OCI-LY7 (cell line): ENCODE measurements at regions of chr3 and their contacts with region 1.

Region 1: GRCh38 chr3:177320765-177321247 is 123.5 kb upstream of the TBL1XR1 start:
- DNase-seq: peak; percentile 80
- H3K4me3 ChIP-seq: peak overlapping the region; percentile 30
- H3K27ac ChIP-seq: peak overlapping the region; percentile 53
- H3K4me1 ChIP-seq: peaks cover 66% of the 10 kb centered on the region
- CTCF ChIP-seq: no peak

Region 2: GRCh38 chr3:177197041-177197727 is 123.6 kb before region 1 on chr3 and contains the start of gene TBL1XR1:
- CTCF ChIA-PET with region 1: no interaction called
- POLR2A ChIA-PET with region 1: interaction called, 3 read pairs
- intact Hi-C with region 1: loop called (anchors 2 kb)
- DNase-seq: peak; percentile 94
- H3K4me3 ChIP-seq: peak within 1 kb of the TSS; percentile 100
- H3K27ac ChIP-seq: peak within 1 kb of the TSS; percentile 95
- H3K4me1 ChIP-seq: peaks cover 56% of the 10 kb centered on the region
- CTCF ChIP-seq: no peak
- total RNA-seq, gene TBL1XR1: 103 and 121 TPM in 2 replicates

Region 3: GRCh38 chr3:177294221-177294620 is 26.6 kb before region 1 on chr3:
- CTCF ChIA-PET with region 1: no interaction called
- POLR2A ChIA-PET with region 1: no interaction called
- intact Hi-C with region 1: no loop called
- DNase-seq: no peak
- H3K4me3 ChIP-seq: no peak overlapping the region
- H3K27ac ChIP-seq: no peak overlapping the region
- H3K4me1 ChIP-seq: peaks cover 5% of the 10 kb centered on the region
- CTCF ChIP-seq: no peak

Region 4: DNA sequence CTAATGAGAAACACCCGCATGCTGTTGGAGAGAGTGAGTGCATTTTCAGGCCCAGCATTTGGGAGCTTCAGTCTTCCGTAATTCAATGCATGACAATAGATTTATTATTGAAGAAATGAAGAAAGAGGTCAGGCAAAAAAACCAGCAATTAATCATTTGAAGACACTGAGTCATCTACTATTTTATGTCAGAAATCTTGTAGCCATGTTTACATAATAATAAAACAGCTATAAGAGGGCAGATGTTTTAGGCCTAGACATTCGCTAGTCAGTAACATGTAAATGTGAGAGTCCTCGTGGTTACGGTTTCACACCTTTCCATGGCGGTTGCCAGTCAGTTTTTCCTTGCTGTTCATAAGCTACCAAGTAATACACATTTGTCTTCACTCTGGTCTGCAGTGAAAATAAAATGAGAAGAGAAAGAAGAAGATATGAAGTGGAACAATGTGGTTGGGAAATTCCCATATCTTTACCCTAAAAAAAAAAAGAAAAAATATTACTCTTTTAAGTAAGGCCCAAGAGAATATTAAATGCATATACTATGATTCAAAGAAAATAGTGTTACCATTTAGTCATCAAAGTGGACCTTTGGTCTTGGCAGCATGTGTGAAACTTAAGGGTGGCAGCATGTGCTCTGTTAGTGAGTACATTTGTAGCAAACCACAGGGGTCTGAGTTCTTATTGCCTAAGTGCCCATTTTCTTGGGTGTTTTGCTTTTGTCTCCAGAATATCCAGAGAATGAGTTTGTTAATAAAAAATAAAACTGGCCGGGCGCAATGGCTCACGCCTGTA is 16.9 kb after region 1 on chr3:
- CTCF ChIA-PET with region 1: no interaction called
- POLR2A ChIA-PET with region 1: interaction called, 16 read pairs
- intact Hi-C with region 1: no loop called
- DNase-seq: no peak
- H3K4me3 ChIP-seq: no peak overlapping the region
- H3K27ac ChIP-seq: no peak overlapping the region
- H3K4me1 ChIP-seq: peaks cover 28% of the 10 kb centered on the region
- CTCF ChIP-seq: no peak

Region 5: DNA sequence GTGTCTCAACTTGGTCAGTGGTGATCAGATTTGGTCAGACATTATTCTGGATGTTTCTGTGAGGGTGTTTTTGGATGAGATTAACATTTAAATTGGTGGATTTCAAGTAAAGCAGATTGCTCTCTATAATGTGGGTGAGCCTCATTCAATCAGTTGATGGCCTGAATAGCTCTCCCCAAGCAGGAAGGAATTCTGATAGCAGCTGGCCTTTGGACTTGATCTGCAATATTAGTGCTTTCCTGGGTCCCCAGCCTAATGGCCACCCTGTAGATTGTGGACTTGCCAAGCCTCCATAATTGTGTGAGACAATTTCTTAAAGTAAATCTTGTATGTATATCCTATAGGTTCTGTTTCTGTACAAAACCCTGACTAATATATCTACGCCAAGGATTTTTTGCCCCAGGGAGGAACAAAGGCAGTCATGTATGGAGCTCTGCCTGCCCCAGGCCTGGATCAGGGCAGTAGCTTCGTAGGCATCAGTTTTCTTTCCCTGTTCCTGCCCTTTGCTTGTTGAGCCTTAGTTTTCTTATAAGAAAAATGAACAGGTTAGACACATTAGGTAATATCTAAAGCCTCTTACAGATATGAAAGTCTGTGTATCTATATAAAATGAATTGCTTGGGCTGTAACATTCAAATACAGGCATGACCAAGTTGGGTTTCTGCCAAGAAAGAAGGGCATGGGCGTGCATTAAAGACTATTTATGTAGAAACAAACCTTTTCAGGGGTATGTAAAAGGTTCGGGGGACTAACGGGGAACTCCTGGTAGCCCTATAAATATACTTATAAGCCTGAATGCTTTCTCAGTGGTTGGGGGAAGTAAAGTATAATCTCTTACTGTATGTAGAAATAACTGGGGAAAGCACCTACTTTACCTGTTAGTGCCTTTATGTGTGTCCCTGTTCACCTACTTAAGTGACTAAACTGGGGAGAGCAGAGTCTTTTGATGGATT is 30.7 kb after region 1 on chr3:
- CTCF ChIA-PET with region 1: no interaction called
- POLR2A ChIA-PET with region 1: interaction called, 4 read pairs
- intact Hi-C with region 1: loop called (anchors 1 kb)
- DNase-seq: peak; percentile 76
- H3K4me3 ChIP-seq: peak overlapping the region; percentile 44
- H3K27ac ChIP-seq: peak overlapping the region; percentile 82
- H3K4me1 ChIP-seq: peaks cover 81% of the 10 kb centered on the region
- CTCF ChIP-seq: no peak